PC-9 (cell line): ENCODE measurements at regions of chr2 and their contacts with region 1.

Region 1: DNA sequence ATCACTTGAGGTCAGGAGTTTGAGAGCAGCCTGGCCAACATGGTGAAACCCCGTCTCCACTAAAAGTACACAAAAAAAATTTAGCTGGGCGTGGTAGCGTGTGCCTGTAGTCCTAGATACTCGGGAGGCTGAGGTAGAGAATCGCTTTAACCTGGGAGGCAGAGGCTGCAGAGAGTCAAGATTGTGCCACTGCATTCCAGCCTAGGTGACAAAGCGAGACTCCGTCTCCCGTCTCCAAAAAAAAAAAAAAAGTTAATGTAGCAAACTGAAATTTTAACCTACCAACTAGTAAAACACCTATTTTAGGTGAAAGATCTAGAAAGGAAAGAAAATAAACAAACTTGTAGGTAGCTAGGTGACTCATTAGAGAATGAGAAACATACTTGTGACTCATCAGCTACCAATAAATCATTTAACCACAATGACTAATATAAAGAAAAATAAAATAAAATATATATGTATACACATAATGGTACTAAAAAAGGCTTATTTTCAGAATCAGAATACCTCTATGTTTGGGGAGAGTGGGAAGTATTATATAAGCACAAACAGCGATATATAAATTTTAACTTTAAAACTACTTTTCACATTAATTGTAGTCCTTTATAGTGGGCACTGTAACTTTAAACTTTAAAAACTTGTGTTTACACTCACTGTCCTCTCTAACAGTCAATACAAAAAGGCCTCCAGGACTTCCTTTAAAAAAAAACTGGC is 36.6 kb downstream of the DARS1 start:
- DNase-seq: peak; percentile 75 to 95
- H3K4me3 ChIP-seq: peak overlapping the region; percentile 36; the same call in 1 of the 2 replicates
- H3K27ac ChIP-seq: peak overlapping the region; percentile 93
- H3K4me1 ChIP-seq: peaks cover 41% of the 10 kb centered on the region
- H3K27me3 ChIP-seq: no peaks in the 10 kb centered on the region
- CTCF ChIP-seq: no peak

Region 2: GRCh38 chr2:135876066-135876711 is 72.6 kb before region 1 on chr2 and contains the start of gene MCM6:
- CTCF ChIA-PET with region 1: no interaction called
- POLR2A ChIA-PET with region 1: no interaction called
- intact Hi-C with region 1: loop called (anchors 10 kb)
- DNase-seq: peak; percentile 95 to 97
- H3K4me3 ChIP-seq: peak within 1 kb of the TSS; percentile 63
- H3K27ac ChIP-seq: peak within 1 kb of the TSS; percentile 19; the same call in 1 of the 2 replicates
- H3K4me1 ChIP-seq: peaks cover 18% of the 10 kb centered on the region; the same call in 1 of the 2 replicates
- H3K27me3 ChIP-seq: no peaks in the 10 kb centered on the region
- CTCF ChIP-seq: no peak
- total RNA-seq, gene MCM6: 26.7 and 33.1 TPM in 2 replicates

Region 3: GRCh38 chr2:135960656-135961551 is 12.1 kb after region 1 on chr2:
- CTCF ChIA-PET with region 1: no interaction called
- POLR2A ChIA-PET with region 1: interaction called, 13 read pairs
- intact Hi-C with region 1: no loop called
- DNase-seq: no peak
- H3K4me3 ChIP-seq: no peak overlapping the region
- H3K27ac ChIP-seq: 0 out of 2 replicates have a peak overlapping the region, but pooled peaks have one; percentile 13
- H3K4me1 ChIP-seq: no peaks in the 10 kb centered on the region
- H3K27me3 ChIP-seq: no peaks in the 10 kb centered on the region
- CTCF ChIP-seq: no peak

Region 4: DNA sequence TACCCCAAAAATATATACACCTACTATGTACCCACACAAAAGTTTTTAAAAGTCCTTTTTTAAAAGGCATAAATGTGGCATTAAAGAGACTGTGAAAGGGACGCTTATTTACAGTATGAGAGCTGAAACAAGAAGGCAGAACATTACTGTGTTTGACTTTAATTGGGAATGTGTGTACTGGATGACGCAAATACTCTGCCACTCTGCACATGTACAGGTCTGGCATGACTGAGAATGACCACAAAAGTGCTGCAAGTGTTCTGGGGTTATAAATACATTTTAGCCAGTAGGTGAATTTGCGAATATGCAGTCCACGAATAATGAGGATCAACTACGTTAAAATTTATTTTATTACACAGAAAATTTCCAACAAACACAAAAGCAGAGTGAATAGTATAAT is 25.2 kb after region 1 on chr2:
- CTCF ChIA-PET with region 1: no interaction called
- POLR2A ChIA-PET with region 1: no interaction called
- intact Hi-C with region 1: no loop called
- DNase-seq: no peak
- H3K4me3 ChIP-seq: no peak overlapping the region
- H3K27ac ChIP-seq: no peak overlapping the region
- H3K4me1 ChIP-seq: no peaks in the 10 kb centered on the region
- H3K27me3 ChIP-seq: no peaks in the 10 kb centered on the region
- CTCF ChIP-seq: no peak

Region 5: GRCh38 chr2:136207030-136207623 is 258.3 kb after region 1 on chr2:
- CTCF ChIA-PET with region 1: no interaction called
- POLR2A ChIA-PET with region 1: no interaction called
- intact Hi-C with region 1: no loop called
- DNase-seq: no peak
- H3K4me3 ChIP-seq: no peak overlapping the region
- H3K27ac ChIP-seq: no peak overlapping the region
- H3K4me1 ChIP-seq: peaks cover 14% of the 10 kb centered on the region; the same call in 1 of the 2 replicates
- H3K27me3 ChIP-seq: no peaks in the 10 kb centered on the region
- CTCF ChIP-seq: no peak

Region 6: GRCh38 chr2:136238286-136239078 is 289.7 kb after region 1 on chr2:
- CTCF ChIA-PET with region 1: no interaction called
- POLR2A ChIA-PET with region 1: no interaction called
- intact Hi-C with region 1: loop called (anchors 1 kb)
- DNase-seq: peak; percentile 23 to 56
- H3K4me3 ChIP-seq: no peak overlapping the region
- H3K27ac ChIP-seq: peak overlapping the region; percentile 65
- H3K4me1 ChIP-seq: peaks cover 41% of the 10 kb centered on the region
- H3K27me3 ChIP-seq: no peaks in the 10 kb centered on the region
- CTCF ChIP-seq: no peak